ENCODE measurements at regions of chr1 and their contacts with region 1.

Region 1: DNA sequence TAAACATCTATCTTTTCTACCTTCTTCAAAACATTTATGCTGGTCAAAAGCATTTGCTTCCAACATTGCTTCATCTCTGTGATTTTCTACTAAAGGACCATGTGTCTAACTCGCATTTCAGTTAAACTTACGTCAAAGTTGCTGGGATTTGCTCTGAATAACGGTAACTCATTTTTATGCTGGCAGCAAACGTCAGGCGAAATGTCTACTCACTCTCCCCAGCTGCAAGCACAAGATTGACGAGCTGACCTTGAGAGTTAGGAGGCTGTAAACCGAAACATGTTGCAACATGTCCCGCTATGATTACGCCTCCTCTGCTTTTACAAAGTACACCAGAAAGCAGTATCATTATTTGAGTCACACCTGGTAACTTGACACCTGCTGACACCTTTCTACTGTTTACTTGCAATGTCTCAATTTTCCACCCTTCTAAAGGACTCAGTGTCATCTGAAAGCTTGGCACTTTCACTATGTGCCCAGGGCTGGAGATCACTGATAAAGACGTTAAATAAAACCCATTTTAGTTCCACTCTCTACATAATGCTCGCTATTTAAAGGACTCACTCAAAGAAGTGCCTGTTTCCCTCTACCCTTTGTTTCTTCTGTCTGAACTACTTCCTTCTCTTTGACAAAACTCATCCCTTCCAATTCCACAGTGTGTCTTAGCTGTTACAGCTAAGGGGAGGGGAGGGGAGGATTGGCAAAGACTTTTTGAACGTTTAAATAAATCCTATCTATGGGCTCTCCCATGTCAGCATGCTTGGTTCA is 111.9 kb downstream of the PTPN14 start:
- DNase-seq: no peak
- H3K4me3 ChIP-seq: no peak overlapping the region
- CTCF ChIP-seq: no peak

Region 2: GRCh38 chr1:214362188-214362882 is 77.2 kb before region 1 on chr1:
- in situ Hi-C with region 1: loop called (anchors 5 kb)
- DNase-seq: peak; percentile 73
- H3K4me3 ChIP-seq: no peak overlapping the region
- CTCF ChIP-seq: no peak

Region 3: DNA sequence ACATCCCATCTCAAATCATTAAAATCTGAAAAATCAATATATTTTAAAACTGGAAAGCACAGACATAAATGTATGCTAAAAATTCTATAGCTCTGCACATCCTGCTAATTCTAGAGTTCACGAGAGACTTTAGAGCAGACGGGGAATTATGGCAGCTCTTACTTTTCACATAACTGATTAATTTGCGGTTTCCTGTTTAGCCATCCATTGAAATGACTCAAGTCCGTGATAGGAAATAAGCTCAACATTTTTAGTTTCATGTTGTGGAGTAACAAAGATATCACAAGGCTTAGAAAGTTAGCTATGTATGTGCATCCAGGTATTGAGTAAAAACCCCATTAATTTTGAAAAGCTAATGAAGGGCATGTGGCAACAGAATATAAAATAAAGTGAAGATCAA is 35.4 kb before region 1 on chr1:
- in situ Hi-C with region 1: no loop called
- DNase-seq: peak; percentile 66
- H3K4me3 ChIP-seq: no peak overlapping the region
- CTCF ChIP-seq: no peak

Region 4: GRCh38 chr1:214476958-214477870 is 37.7 kb after region 1 on chr1:
- in situ Hi-C with region 1: no loop called
- DNase-seq: peak; percentile 93
- H3K4me3 ChIP-seq: no peak overlapping the region
- CTCF ChIP-seq: no peak

Region 5: GRCh38 chr1:214494706-214495105 is 55.2 kb after region 1 on chr1:
- in situ Hi-C with region 1: loop called (anchors 5 kb)
- DNase-seq: peak; percentile 34
- H3K4me3 ChIP-seq: no peak overlapping the region
- CTCF ChIP-seq: no peak